GM12878 (cell line): ENCODE measurements at regions of chr17 and their contacts with region 1.

Region 1: DNA sequence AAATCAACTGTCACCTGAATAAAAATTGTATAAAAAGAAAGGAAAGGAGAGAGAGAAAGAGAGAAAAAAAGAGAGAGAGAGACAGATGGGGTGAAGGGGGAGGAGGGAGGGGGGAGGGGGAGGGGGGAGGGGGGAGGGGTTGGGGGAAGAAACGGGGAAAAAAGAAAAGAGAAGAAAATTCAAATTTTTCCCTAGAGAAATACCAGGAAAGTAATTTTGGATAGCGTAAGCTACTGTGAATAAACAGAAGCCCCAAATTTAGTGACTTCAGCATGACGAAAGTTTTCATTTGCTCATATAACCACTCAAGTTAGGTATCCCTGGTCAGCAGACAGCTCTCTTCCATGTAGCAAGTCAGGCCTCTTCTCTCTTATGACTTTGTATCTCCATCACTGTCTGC is 289.4 kb upstream of the MYOCD start:
- DNase-seq: no peak
- ATAC-seq: no peak
- H3K4me3 ChIP-seq: no peak overlapping the region
- H3K27ac ChIP-seq: no peak overlapping the region
- H3K4me1 ChIP-seq: no peaks in the 10 kb centered on the region
- H3K27me3 ChIP-seq: no peaks in the 10 kb centered on the region
- CTCF ChIP-seq: no peak
- EP300 ChIP-seq: no peak
- POLR2A ChIP-seq: no peak
- RAD21 ChIP-seq: no peak

Region 2: DNA sequence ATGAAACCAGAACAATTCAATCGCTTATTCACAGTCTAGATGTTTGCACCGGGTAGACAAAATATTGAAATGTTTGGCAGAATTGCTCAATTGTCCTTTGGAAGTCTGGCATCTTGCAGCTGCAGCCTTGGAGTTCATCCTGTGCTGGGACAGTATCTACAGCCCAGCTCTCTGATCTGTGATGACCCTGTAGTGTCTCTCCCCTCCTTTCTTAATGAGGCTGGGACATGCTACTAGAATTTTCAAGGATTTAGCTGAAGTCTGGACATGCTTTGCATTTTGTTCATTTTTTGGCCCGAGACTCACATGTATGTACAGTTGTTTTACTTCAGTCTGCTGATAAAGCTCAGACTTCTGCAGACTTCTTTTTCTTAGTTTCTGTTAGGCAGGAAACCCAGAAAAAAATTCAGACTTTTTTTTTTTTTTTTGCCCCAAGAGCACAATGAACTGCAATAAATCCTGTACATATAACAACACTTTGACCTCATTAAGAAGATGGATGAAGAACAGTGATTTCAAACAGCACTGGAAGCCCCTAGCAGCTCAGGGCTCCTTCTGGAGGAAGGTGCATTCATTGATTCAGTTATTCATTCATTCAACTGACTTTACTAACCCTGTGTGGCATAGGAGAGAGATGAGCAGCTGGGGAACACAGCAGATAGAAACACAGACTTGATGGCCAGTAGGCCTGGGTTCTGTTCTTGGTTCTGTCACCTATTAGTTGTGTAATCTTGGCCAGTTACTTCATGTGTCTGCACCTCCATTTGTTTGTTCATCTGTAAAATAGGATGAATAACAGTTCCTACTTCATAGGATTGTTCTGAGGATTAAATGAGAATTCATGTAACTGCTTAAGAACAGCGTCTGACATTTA is 145.6 kb before region 1 on chr17:
- CTCF ChIA-PET with region 1: no interaction called
- POLR2A ChIA-PET with region 1: no interaction called
- RAD21 ChIA-PET with region 1: no interaction called
- SMC1A ChIA-PET with region 1: no interaction called
- in situ Hi-C with region 1: no loop called
- intact Hi-C with region 1: no loop called
- DNase-seq: no peak
- ATAC-seq: no peak
- H3K4me3 ChIP-seq: no peak overlapping the region
- H3K27ac ChIP-seq: no peak overlapping the region
- H3K4me1 ChIP-seq: no peaks in the 10 kb centered on the region
- H3K27me3 ChIP-seq: no peaks in the 10 kb centered on the region
- CTCF ChIP-seq: no peak
- EP300 ChIP-seq: no peak
- POLR2A ChIP-seq: no peak
- RAD21 ChIP-seq: no peak

Region 3: GRCh38 chr17:12318571-12319266 is 57.6 kb before region 1 on chr17:
- CTCF ChIA-PET with region 1: no interaction called
- POLR2A ChIA-PET with region 1: no interaction called
- RAD21 ChIA-PET with region 1: no interaction called
- SMC1A ChIA-PET with region 1: no interaction called
- in situ Hi-C with region 1: no loop called
- intact Hi-C with region 1: loop called (anchors 10 kb)
- DNase-seq: no peak
- ATAC-seq: no peak
- H3K4me3 ChIP-seq: no peak overlapping the region
- H3K27ac ChIP-seq: no peak overlapping the region
- H3K4me1 ChIP-seq: no peaks in the 10 kb centered on the region
- H3K27me3 ChIP-seq: no peaks in the 10 kb centered on the region
- CTCF ChIP-seq: no peak
- EP300 ChIP-seq: no peak
- POLR2A ChIP-seq: no peak
- RAD21 ChIP-seq: no peak